Right cardiac atrium (tissue), 5 donors: ENCODE measurements at regions of chr22 and their contacts with region 1.

Region 1: DNA sequence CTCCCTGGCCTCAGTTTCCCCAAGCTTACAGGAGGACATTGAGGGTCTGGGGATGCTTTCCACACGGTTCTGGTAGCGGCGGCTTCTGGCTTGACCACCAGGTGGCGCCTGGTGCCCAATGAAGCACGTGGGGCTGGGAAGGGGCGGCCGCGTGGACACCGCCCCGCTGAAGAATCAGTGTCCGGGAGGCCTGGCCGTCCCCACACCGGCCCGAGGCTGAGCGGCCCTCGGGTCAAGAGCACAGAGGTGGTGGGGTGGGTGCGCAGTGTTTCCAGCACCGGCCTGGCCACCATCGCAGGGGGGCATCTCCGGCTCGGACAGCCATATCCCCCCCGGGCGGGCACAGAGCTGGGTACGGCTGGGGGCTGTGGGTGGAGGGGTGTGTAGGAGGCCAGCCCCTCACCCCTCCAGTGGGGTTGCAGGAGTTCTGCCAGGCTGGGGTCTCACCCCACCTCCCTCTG is 27.8 kb upstream of the PPARA start:
- DNase-seq: peak; percentile 83 to 93 (median 92)
- ATAC-seq: peak; percentile 59 to 67
- H3K4me3 ChIP-seq: no peak overlapping the region
- H3K27ac ChIP-seq: no peak overlapping the region
- H3K4me1 ChIP-seq: no peaks in the 10 kb centered on the region
- H3K27me3 ChIP-seq: no peaks in the 10 kb centered on the region

Region 2: GRCh38 chr22:46309526-46310085 is 187.1 kb after region 1 on chr22:
- intact Hi-C with region 1: loop called in 3 of 4 experiments (anchors 2 to 5 kb)
- DNase-seq: peak in 2 of 3 donors; percentile 73 to 78
- ATAC-seq: peak; percentile 66 to 77
- H3K4me3 ChIP-seq: no peak overlapping the region
- H3K27ac ChIP-seq: peak overlapping the region; percentile 22
- H3K4me1 ChIP-seq: no peaks in the 10 kb centered on the region
- H3K27me3 ChIP-seq: no peaks in the 10 kb centered on the region

Region 3: GRCh38 chr22:46317646-46318045 is 195.1 kb after region 1 on chr22:
- intact Hi-C with region 1: loop called (anchors 2 to 5 kb)
- DNase-seq: no peak
- ATAC-seq: no peak
- H3K4me3 ChIP-seq: no peak overlapping the region
- H3K27ac ChIP-seq: no peak overlapping the region
- H3K4me1 ChIP-seq: no peaks in the 10 kb centered on the region
- H3K27me3 ChIP-seq: no peaks in the 10 kb centered on the region

Region 4: GRCh38 chr22:46542011-46542985 is 419.8 kb after region 1 on chr22:
- intact Hi-C with region 1: loop called in 1 of 4 experiments (anchors 10 kb)
- DNase-seq: peak; percentile 76 to 90 (median 85)
- ATAC-seq: peak; percentile 83 to 86
- H3K4me3 ChIP-seq: no peak overlapping the region
- H3K27ac ChIP-seq: no peak overlapping the region
- H3K4me1 ChIP-seq: no peaks in the 10 kb centered on the region
- H3K27me3 ChIP-seq: no peaks in the 10 kb centered on the region